ENCODE measurements at regions of chr11 and their contacts with region 1.

Region 1: GRCh38 chr11:120801801-120802689 is 221.9 kb upstream of the TBCEL start:
- DNase-seq: peak; percentile 40
- H3K4me3 ChIP-seq: no peak overlapping the region
- H3K27ac ChIP-seq: no peak overlapping the region
- H3K4me1 ChIP-seq: no peaks in the 10 kb centered on the region
- H3K27me3 ChIP-seq: no peaks in the 10 kb centered on the region
- CTCF ChIP-seq: peak; percentile 86 to 93

Region 2: DNA sequence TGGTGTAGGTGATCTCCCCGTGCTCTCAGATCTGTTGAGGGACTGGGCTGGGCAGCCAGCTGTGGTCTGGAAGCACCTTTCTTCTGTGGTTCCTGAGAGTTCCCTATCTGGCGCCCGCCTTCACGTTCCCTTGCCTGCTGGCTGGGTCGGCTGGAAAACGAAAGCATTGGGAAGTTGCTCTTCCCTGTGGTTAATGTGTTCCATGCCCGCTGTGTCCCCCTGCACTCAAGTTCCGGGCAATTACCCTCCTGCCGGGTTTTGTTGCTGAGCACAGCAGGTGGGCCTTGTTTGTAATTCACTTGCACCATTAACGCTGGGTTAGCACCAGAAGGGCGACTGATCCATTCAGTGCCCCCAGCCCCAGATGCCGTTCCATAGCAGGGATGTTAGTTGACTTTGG is 156.4 kb before region 1 on chr11:
- CTCF ChIA-PET with region 1: no interaction called
- dilution Hi-C with region 1: no loop called
- in situ Hi-C with region 1: no loop called
- intact Hi-C with region 1: loop called (anchors 10 kb)
- DNase-seq: no peak
- H3K4me3 ChIP-seq: no peak overlapping the region
- H3K27ac ChIP-seq: no peak overlapping the region
- H3K4me1 ChIP-seq: no peaks in the 10 kb centered on the region
- H3K27me3 ChIP-seq: peaks cover 3% of the 10 kb centered on the region
- CTCF ChIP-seq: no peak

Region 3: DNA sequence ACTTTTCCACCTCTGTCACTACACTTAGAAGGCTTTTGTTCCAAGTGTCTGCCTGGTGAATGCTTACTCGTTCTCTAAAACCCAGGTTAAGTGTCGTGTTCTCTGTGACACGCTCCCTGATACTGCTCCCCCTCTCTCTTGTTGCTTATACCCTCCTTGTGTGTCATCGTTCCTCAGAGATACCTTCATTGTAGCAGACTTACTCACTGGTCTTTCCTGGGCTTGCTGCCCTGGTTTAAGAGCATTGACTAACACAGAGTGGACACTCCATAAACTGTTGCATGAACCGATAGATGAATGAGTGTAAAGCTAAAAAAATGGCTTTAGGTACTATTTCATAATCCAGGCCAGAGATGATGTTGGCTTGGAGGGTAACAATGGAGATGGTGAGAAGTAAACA is 119.2 kb before region 1 on chr11:
- CTCF ChIA-PET with region 1: no interaction called
- dilution Hi-C with region 1: no loop called
- in situ Hi-C with region 1: no loop called
- intact Hi-C with region 1: loop called (anchors 2 kb)
- DNase-seq: peak; percentile 7
- H3K4me3 ChIP-seq: no peak overlapping the region
- H3K27ac ChIP-seq: no peak overlapping the region
- H3K4me1 ChIP-seq: no peaks in the 10 kb centered on the region
- H3K27me3 ChIP-seq: no peaks in the 10 kb centered on the region
- CTCF ChIP-seq: no peak

Region 4: GRCh38 chr11:121194731-121195596 is 392.9 kb after region 1 on chr11:
- CTCF ChIA-PET with region 1: no interaction called
- dilution Hi-C with region 1: no loop called
- in situ Hi-C with region 1: no loop called
- intact Hi-C with region 1: loop called (anchors 10 kb)
- DNase-seq: peak; percentile 41
- H3K4me3 ChIP-seq: no peak overlapping the region
- H3K27ac ChIP-seq: no peak overlapping the region
- H3K4me1 ChIP-seq: no peaks in the 10 kb centered on the region
- H3K27me3 ChIP-seq: peaks cover 5% of the 10 kb centered on the region
- CTCF ChIP-seq: peak; percentile 77 to 81

Measured in mammary epithelial cell (primary cell).